IMR-90 (cell line): ENCODE measurements at regions of chr4 and their contacts with region 1.

Region 1: DNA sequence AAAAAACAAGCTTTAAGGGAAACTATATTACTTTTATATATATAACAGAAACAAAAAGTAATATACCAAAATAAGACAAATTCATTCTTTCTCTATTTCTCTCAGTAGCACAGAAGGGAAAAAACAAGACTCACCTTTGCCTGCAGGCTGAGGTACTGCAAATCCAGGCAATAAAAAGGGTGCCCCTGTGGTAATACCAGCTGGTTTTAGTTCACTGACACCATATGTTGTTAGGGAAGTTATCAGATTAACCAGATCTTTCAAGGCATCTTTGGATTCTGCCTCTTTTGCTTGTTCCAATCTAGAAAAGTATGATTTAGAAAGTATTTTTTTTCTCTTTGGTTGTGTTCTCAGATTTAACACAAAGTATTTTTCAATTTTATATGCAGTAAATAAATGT is 139.8 kb downstream of the WDFY3 start:
- DNase-seq: no peak
- ATAC-seq: no peak
- H3K4me3 ChIP-seq: no peak overlapping the region
- H3K27ac ChIP-seq: no peak overlapping the region
- H3K4me1 ChIP-seq: no peaks in the 10 kb centered on the region
- H3K27me3 ChIP-seq: no peaks in the 10 kb centered on the region
- CTCF ChIP-seq: no peak
- POLR2A ChIP-seq: no peak
- RAD21 ChIP-seq: no peak

Region 2: DNA sequence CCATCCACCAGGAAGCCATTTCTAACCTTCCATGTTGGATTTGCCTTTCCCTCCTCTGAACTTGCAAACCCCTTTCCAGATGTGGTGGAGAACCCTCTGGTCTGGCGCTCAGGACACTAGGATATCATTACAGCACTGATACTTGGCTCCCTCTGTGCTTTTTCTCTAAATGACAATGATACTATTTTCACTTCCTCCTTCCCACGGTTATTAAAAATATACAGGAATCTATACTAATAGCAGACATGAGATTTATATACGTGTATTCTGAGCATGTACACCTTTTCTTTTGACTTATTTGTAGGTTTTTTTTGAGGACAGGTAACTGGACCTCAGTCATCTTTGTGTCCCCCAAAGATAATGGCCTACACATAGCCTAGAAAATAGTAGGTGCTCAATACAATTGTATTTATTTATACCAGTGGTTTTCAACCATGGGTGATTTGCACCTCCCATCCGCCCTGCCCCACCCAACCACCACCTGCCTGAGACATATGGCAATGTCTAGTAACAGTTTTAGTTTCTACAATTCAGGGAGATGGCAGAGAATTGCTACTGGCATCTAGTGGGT is 1651.8 kb before region 1 on chr4:
- CTCF ChIA-PET with region 1: no interaction called
- POLR2A ChIA-PET with region 1: no interaction called
- dilution Hi-C with region 1: no loop called
- in situ Hi-C with region 1: no loop called
- intact Hi-C with region 1: no loop called
- DNase-seq: no peak
- ATAC-seq: no peak
- H3K4me3 ChIP-seq: no peak overlapping the region
- H3K27ac ChIP-seq: no peak overlapping the region
- H3K4me1 ChIP-seq: no peaks in the 10 kb centered on the region
- H3K27me3 ChIP-seq: peaks cover 10% of the 10 kb centered on the region
- CTCF ChIP-seq: no peak
- POLR2A ChIP-seq: no peak
- RAD21 ChIP-seq: no peak

Region 3: GRCh38 chr4:84792366-84793301 is 34.0 kb before region 1 on chr4:
- CTCF ChIA-PET with region 1: interaction called, 3 read pairs
- POLR2A ChIA-PET with region 1: interaction called, 22 read pairs
- dilution Hi-C with region 1: no loop called
- in situ Hi-C with region 1: no loop called
- intact Hi-C with region 1: no loop called
- DNase-seq: peak; percentile 45
- ATAC-seq: peak; percentile 64
- H3K4me3 ChIP-seq: no peak overlapping the region
- H3K27ac ChIP-seq: no peak overlapping the region
- H3K4me1 ChIP-seq: no peaks in the 10 kb centered on the region
- H3K27me3 ChIP-seq: no peaks in the 10 kb centered on the region
- CTCF ChIP-seq: no peak
- POLR2A ChIP-seq: no peak
- RAD21 ChIP-seq: no peak

Region 4: DNA sequence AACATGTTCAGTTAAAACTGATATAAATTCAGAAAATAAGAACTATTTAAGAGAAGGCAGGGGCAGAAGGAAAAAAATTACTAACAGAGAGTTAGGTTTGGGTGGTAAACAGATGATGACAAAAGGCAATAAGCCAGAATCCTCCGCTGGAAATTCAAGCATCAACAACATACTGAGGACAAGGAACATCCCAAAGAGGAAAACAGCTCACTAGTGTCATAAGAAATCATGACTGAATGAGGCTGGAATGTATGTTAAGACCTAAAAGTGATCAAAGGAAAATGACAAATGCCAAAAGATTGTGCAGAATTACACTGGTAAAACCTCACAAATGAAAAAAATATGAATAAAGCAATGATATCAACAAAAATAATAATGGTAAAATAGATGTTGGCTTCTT is 51.4 kb after region 1 on chr4:
- CTCF ChIA-PET with region 1: no interaction called
- POLR2A ChIA-PET with region 1: no interaction called
- dilution Hi-C with region 1: no loop called
- in situ Hi-C with region 1: no loop called
- intact Hi-C with region 1: loop called (anchors 5 kb)
- DNase-seq: peak; percentile 89
- ATAC-seq: peak; percentile 83
- H3K4me3 ChIP-seq: no peak overlapping the region
- H3K27ac ChIP-seq: no peak overlapping the region
- H3K4me1 ChIP-seq: peaks cover 4% of the 10 kb centered on the region; the same call in 1 of the 2 replicates
- H3K27me3 ChIP-seq: no peaks in the 10 kb centered on the region
- CTCF ChIP-seq: no peak
- POLR2A ChIP-seq: no peak
- RAD21 ChIP-seq: no peak

Region 5: GRCh38 chr4:85084380-85085094 is 257.9 kb after region 1 on chr4:
- CTCF ChIA-PET with region 1: no interaction called
- POLR2A ChIA-PET with region 1: no interaction called
- dilution Hi-C with region 1: no loop called
- in situ Hi-C with region 1: no loop called
- intact Hi-C with region 1: no loop called
- DNase-seq: peak; percentile 75
- ATAC-seq: peak; percentile 80
- H3K4me3 ChIP-seq: no peak overlapping the region
- H3K27ac ChIP-seq: no peak overlapping the region
- H3K4me1 ChIP-seq: no peaks in the 10 kb centered on the region
- H3K27me3 ChIP-seq: no peaks in the 10 kb centered on the region
- CTCF ChIP-seq: peak; percentile 70
- POLR2A ChIP-seq: no peak
- RAD21 ChIP-seq: peak; percentile 50